ENCODE measurements at regions of chr21 and their contacts with region 1.

Region 1: DNA sequence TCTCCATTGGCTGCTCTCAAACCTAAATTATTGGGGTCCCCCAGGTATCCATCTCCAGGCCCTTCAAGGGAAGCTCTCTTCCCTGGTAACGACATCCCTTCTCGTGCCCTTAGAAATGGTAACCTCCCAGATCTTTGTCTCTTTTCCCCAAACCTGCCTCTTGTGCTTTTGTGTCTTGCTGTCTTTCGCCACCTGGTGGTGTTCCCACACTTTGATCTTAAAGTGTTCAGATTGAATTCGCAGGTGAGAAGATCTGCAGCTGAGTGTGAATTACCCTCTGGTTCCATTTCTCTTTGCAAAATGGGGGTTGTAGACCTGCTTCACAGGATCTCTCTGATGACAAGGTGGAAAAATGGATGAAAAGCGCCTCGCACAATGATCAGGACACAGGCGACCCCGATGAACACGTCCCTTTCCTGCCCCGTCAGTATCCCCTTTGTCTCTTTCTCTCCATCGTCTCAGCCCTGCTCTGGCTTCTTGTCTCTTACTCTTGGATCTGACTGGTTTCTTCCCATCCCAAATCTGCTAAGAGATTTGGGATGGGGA is 53.1 kb downstream of the DOP1B start:
- DNase-seq: peak; percentile 82
- ATAC-seq: peak; percentile 18; the same call in 1 of the 2 replicates
- H3K4me3 ChIP-seq: no peak overlapping the region
- H3K27ac ChIP-seq: peak overlapping the region; percentile 51
- H3K4me1 ChIP-seq: peaks cover 26% of the 10 kb centered on the region
- H3K27me3 ChIP-seq: no peaks in the 10 kb centered on the region
- CTCF ChIP-seq: peak; percentile 57
- POLR2A ChIP-seq: no peak
- RAD21 ChIP-seq: peak; percentile 64

Region 2: DNA sequence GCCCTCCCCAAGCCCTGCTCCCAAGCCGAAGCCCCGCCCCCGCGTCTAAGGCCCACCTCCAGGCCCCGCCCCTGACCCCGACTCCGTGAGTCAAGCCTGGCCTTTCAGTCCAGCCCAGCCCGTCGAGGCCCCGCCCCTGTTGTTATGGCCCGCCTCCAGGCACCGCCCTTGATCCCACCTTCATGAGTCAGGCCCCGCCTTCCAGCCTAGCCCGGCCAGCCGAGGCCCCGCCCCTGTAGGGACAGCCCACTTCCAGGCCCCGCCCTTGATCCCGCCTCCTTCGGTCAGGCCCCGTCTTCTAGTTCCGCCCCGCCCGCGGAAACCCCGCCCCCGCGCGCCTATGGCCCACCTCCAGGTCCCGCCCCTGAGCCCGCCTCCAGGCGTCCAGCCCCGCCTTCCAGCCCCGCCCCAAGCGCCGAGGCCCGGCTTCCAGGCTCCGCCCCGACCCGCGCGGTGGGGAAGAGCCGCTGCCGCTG is 53.3 kb before region 1 on chr21:
- CTCF ChIA-PET with region 1: interaction called, 3 read pairs
- POLR2A ChIA-PET with region 1: no interaction called
- dilution Hi-C with region 1: no loop called
- in situ Hi-C with region 1: loop called (anchors 10 kb)
- intact Hi-C with region 1: loop called (anchors 5 kb)
- DNase-seq: peak; percentile 98
- ATAC-seq: peak; percentile 96
- H3K4me3 ChIP-seq: peak overlapping the region; percentile 88
- H3K27ac ChIP-seq: no peak overlapping the region
- H3K4me1 ChIP-seq: peaks cover 4% of the 10 kb centered on the region
- H3K27me3 ChIP-seq: no peaks in the 10 kb centered on the region
- CTCF ChIP-seq: no peak
- POLR2A ChIP-seq: no peak; the same call in 1 of the 2 replicates
- RAD21 ChIP-seq: no peak

Region 3: DNA sequence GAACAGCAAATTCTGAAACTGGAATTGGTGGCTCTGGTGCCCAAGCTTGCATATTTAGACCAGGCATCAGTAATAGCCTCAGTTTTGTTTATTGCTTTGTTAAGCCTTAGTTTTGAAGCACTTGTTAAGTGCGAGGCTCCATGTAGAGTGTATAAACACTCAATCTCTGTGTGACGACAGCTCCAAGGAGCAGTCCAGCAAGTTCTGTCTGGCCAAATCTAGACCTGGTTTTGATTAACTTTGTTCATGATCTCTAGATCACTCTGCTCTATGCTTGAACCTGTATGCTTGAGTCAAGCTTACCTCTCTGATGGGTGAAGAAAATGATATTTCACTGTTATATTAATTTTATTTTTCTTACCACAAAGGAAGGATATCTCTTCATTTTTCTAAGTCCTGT is 15.7 kb before region 1 on chr21:
- CTCF ChIA-PET with region 1: no interaction called
- POLR2A ChIA-PET with region 1: no interaction called
- dilution Hi-C with region 1: no loop called
- in situ Hi-C with region 1: no loop called
- intact Hi-C with region 1: no loop called
- DNase-seq: no peak
- ATAC-seq: no peak
- H3K4me3 ChIP-seq: no peak overlapping the region
- H3K27ac ChIP-seq: no peak overlapping the region
- H3K4me1 ChIP-seq: no peaks in the 10 kb centered on the region
- H3K27me3 ChIP-seq: no peaks in the 10 kb centered on the region
- CTCF ChIP-seq: no peak
- POLR2A ChIP-seq: no peak
- RAD21 ChIP-seq: no peak